Prostate gland (tissue), 2 donors: ENCODE measurements at regions of chr6 and their contacts with region 1.

Region 1: DNA sequence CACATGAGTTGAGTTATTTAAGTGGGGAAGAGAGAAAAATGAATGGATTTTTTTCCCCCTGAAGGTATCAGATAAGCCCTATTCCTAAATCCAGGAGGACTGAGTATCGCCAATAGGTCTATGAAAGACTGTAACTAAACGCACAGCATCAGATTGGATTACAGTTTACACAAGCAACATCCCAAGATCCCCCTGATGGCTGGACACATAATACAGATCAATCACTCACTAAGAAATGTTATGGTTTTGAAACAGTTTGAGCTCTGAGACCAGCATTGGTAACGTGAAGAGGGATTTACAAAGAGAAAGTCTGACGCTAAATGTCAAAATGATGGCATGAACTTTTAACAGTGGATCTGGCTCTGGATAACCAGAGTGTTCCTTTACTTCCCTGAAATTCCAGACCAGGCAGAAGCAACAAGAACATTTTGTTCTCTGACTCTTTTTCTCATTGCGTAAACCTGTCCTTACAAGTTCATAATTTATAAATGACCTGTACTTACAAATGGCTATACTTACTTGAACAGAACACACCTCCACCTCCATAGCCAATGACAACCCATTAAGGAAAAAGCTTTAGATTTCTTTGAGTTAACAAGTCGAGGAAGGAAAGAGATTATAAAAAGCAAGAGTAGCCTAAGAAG is 131.8 kb upstream of the BEND3 start:
- DNase-seq: peak; percentile 65
- H3K4me3 ChIP-seq: peak overlapping the region in 1 of 2 donors; percentile 10
- H3K27ac ChIP-seq: peak overlapping the region; percentile 75 to 86
- H3K4me1 ChIP-seq: peaks cover 3% of the 10 kb centered on the region
- H3K27me3 ChIP-seq: no peaks in the 10 kb centered on the region
- CTCF ChIP-seq: no peak
- POLR2A ChIP-seq: no peak

Region 2: GRCh38 chr6:107318100-107318736 is 71.1 kb after region 1 on chr6:
- intact Hi-C with region 1: loop called (anchors 10 kb)
- DNase-seq: peak; percentile 16
- H3K4me3 ChIP-seq: no peak overlapping the region
- H3K27ac ChIP-seq: no peak overlapping the region
- H3K4me1 ChIP-seq: peaks cover 6% of the 10 kb centered on the region
- H3K27me3 ChIP-seq: no peaks in the 10 kb centered on the region
- CTCF ChIP-seq: peak in 3 of 4 experiments; percentile 28 to 42 (median 38)
- POLR2A ChIP-seq: no peak

Region 3: DNA sequence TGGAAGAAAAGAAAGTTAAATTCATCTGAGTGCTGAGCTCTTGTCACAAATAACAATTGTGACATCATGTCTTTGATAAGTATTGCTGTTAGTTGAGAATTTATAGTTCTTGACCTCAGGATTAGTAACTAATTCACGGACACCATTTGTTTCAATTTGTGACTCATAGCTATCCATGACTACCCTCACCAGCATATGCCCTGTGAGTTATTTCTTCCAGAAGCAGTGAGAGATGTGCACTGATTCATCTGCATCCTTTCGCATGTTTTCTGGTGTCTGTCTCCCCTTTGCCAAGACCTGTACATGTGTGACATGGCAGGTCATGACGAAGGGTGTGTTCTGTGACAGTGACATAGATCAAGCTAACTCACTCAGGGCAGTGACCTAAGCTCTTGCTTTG is 329.8 kb after region 1 on chr6:
- intact Hi-C with region 1: no loop called
- DNase-seq: no peak
- H3K4me3 ChIP-seq: no peak overlapping the region
- H3K27ac ChIP-seq: no peak overlapping the region
- H3K4me1 ChIP-seq: no peaks in the 10 kb centered on the region
- H3K27me3 ChIP-seq: no peaks in the 10 kb centered on the region
- CTCF ChIP-seq: no peak
- POLR2A ChIP-seq: no peak

Region 4: GRCh38 chr6:107618672-107619071 is 371.6 kb after region 1 on chr6:
- intact Hi-C with region 1: no loop called
- DNase-seq: no peak
- H3K4me3 ChIP-seq: no peak overlapping the region
- H3K27ac ChIP-seq: no peak overlapping the region
- H3K4me1 ChIP-seq: no peaks in the 10 kb centered on the region
- H3K27me3 ChIP-seq: no peaks in the 10 kb centered on the region
- CTCF ChIP-seq: no peak
- POLR2A ChIP-seq: no peak

Region 5: GRCh38 chr6:107668743-107669474 is 421.8 kb after region 1 on chr6:
- intact Hi-C with region 1: loop called (anchors 10 kb)
- DNase-seq: no peak
- H3K4me3 ChIP-seq: no peak overlapping the region
- H3K27ac ChIP-seq: no peak overlapping the region
- H3K4me1 ChIP-seq: no peaks in the 10 kb centered on the region
- H3K27me3 ChIP-seq: no peaks in the 10 kb centered on the region
- CTCF ChIP-seq: no peak
- POLR2A ChIP-seq: no peak

Region 6: DNA sequence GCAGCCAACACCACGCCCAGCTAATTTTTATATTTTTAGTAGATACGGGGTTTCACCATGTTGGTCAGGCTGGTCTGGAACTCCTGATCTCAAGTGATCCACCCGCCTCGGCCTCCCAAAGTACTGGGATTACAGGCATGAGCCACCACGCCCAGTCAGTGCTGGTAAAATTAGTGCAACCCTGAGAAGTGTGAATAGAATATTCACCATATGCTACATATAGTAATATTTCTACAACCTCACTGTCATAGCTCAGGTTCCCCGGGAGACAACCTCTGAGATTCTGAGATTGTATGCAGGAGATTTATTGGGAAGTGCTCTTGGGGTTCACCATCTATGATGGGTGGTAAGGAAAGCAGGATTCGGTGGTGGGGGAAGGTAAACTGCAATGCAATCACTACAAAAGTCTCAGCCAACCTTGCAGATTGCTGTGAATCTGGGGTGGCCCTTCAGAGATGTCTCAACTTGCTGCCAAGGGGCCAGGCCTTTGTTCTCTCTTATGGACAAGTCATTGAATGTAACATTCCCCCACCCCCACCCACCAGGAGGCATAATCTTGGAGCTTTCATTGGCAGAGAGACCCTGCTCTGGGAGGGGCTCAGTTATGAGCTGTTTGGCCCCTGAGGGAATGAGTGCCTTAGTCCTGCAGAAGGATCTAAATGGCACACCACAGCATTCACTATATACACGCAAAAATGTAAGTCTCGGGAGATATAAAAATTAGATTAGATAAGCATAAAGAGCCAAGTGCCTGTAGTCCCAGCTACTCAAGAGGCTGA is 744.9 kb after region 1 on chr6:
- intact Hi-C with region 1: no loop called
- DNase-seq: no peak
- H3K4me3 ChIP-seq: no peak overlapping the region
- H3K27ac ChIP-seq: no peak overlapping the region
- H3K4me1 ChIP-seq: no peaks in the 10 kb centered on the region
- H3K27me3 ChIP-seq: no peaks in the 10 kb centered on the region
- CTCF ChIP-seq: no peak
- POLR2A ChIP-seq: no peak